ENCODE measurements at regions of chr12 and their contacts with region 1.

Region 1: GRCh38 chr12:56571126-56571525 is 49.5 kb downstream of the RBMS2 start:
- DNase-seq: no peak
- ATAC-seq: no peak
- H3K4me3 Mint-ChIP-seq: no peak overlapping the region
- H3K27ac Mint-ChIP-seq: no peak overlapping the region
- H3K4me1 Mint-ChIP-seq: peaks cover 35% of the 10 kb centered on the region
- H3K27me3 Mint-ChIP-seq: no peaks in the 10 kb centered on the region
- CTCF ChIP-seq: no peak

Region 2: DNA sequence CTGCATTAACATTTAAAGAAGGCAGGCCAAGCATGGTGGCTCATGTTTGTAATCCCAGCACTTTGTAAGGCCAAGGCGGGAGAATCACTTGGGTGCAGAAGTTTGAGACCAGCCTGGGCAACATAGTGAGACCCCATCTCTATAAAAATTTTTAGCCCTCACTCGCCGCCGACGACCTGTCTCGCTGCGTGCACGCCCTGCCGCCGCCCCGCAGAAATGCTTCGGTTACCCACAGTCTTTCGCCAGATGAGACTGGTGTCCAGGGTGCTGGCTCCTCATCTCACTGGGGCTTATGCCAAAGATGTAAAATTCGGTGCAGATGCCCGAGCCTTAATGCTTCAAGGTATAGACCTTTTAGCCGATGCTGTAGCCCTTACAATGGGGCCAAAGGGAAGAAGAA is 60.3 kb before region 1 on chr12:
- CTCF ChIA-PET with region 1: interaction called, 47 read pairs
- POLR2A ChIA-PET with region 1: interaction called, 5 read pairs
- intact Hi-C with region 1: loop called (anchors 5 kb)
- DNase-seq: no peak
- ATAC-seq: no peak
- H3K4me3 Mint-ChIP-seq: no peak overlapping the region
- H3K27ac Mint-ChIP-seq: no peak overlapping the region
- H3K4me1 Mint-ChIP-seq: peaks cover 4% of the 10 kb centered on the region
- H3K27me3 Mint-ChIP-seq: peaks cover 1% of the 10 kb centered on the region
- CTCF ChIP-seq: no peak

Region 3: DNA sequence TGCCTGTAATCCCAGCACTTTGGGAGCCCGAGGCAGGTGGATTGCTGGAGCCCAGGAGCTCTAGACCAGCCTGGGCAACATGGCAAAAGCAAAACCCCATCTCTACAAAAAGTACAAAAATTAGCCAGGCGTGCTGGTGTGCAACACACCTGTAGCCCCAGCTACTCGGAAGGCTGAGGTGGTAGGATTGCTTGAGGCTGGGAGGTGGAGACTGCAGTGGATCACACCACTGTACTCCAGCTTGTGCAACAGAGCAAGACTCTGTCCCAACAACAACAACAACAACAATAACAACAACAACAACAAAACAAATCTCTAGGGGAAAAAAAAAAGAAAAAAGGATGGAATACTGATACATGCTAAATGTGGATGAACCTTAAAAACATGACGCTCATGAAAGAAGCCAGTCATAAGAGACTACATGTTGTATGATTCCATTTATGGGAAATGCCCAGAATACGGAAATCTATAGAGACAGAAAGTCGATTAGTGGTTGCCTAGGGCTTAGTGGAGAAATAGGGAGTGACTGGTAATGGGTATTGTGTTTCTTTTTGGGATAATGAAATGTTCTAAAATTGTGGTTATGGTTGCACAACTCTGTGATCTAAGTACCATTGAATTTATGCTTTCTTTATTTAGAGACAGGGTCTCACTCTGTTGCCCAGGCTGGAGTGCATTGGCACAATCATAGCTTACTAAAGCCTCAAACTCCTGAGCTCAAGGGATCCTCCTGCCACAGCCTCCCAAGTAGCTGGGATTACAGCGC is 41.7 kb before region 1 on chr12:
- CTCF ChIA-PET with region 1: no interaction called
- POLR2A ChIA-PET with region 1: no interaction called
- intact Hi-C with region 1: no loop called
- DNase-seq: no peak
- ATAC-seq: no peak
- H3K4me3 Mint-ChIP-seq: no peak overlapping the region
- H3K27ac Mint-ChIP-seq: no peak overlapping the region
- H3K4me1 Mint-ChIP-seq: no peaks in the 10 kb centered on the region
- H3K27me3 Mint-ChIP-seq: no peaks in the 10 kb centered on the region
- CTCF ChIP-seq: no peak

Measured in activated CD8-positive, alpha-beta T cell treated with anti-CD3 and anti-CD28 coated beads for 36 hours (primary cell).